Heart left ventricle (tissue), 16 donors: ENCODE measurements at regions of chr3 and their contacts with region 1.

Region 1: GRCh38 chr3:48088749-48089466 is 72.7 kb upstream of the MAP4 start:
- DNase-seq: peak; percentile 97 to 99 (median 98)
- ATAC-seq: peak; percentile 85 to 98 (median 94)
- H3K4me3 ChIP-seq: peak overlapping the region; percentile 55 to 100 (median 94)
- H3K27ac ChIP-seq: peak overlapping the region; percentile 90 to 100 (median 98)
- H3K4me1 ChIP-seq: peaks cover 0 to 44% (median 39%) of the 10 kb centered on the region in 12 donors
- H3K27me3 ChIP-seq: no peaks in the 10 kb centered on the region
- CTCF ChIP-seq: peak in 1 of 12 donors; percentile 10
- POLR2A ChIP-seq: peak; percentile 39 to 87

Region 2: DNA sequence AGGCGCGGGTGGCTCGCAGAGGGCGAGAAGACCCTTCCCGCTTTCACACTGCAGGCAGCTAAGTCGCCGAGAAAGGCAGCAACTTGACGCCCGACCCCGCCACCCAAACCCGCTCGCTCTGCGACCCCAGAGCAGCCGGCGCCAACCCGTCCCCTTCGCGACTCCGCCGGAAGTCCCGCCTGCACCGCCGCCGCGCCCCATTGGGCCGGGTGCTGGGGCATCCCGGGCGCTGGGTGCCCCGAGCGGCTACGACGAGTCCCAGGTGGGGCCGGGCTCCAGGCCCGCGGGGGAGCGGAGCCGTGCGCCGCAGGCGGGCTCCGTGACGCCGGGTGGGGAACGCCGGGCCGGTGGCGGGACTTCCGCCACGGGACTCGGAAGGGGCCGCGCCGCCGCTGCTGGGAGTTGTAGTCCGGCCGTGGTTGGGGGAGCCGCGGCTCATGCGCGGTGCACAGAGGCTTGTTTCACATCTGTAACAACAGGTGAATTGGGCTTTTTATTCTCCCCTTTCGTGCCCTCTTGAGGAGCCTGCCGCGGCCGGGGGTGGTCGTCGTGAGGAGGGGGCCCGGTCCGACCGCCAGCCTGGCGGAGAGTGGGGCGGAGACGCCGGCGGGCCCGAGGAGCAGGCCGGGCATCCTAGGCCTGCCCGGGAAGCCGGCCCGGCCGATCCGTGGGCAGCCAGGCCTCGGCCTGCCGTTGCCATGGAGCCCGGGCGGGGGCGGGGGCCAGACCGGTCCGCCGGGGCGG is 286.0 kb before region 1 on chr3 and contains the start of gene DHX30:
- intact Hi-C with region 1: no loop called
- DNase-seq: peak; percentile 91 to 95 (median 92)
- ATAC-seq: peak; percentile 79 to 96 (median 91)
- H3K4me3 ChIP-seq: peak within 1 kb of the TSS; percentile 69 to 99 (median 90)
- H3K27ac ChIP-seq: peak within 1 kb of the TSS; percentile 94 to 99 (median 98)
- H3K4me1 ChIP-seq: peaks cover 0 to 26% (median 16%) of the 10 kb centered on the region in 12 donors
- H3K27me3 ChIP-seq: no peaks in the 10 kb centered on the region
- CTCF ChIP-seq: no peak
- POLR2A ChIP-seq: peak in 1 of 2 donors; percentile 90
- total RNA-seq, gene DHX30: 41.2 to 74.4 (median 49.4) TPM

Region 3: DNA sequence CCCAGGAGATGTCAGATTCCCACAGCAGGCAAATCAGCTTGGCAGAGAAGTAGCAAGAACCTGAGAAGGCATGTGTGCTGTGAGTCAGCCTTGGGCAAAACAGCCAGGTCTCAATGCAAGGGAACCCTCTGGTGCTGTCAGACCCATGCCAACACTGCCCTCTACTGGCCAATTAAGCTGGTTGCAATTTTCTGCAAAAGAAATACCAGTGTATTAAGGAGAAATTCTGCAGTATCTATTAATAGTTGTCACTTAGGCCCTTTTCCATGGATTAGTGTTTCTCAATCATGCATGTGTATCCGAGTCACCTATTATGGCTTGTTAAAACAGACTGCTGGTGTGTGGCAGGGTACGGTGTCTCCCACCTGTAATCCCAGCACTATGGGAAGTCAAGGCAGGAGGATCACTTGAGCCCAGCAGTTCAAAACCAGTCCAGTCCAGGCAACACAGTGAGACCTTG is 98.9 kb before region 1 on chr3:
- intact Hi-C with region 1: loop called in 4 of 10 experiments (anchors 5 kb)
- DNase-seq: peak; percentile 69 to 85 (median 79)
- ATAC-seq: peak; percentile 85 to 97 (median 95)
- H3K4me3 ChIP-seq: no peak overlapping the region
- H3K27ac ChIP-seq: peak overlapping the region in 1 of 12 donors; percentile 7
- H3K4me1 ChIP-seq: peaks cover 0 to 38% (median 26%) of the 10 kb centered on the region in 12 donors
- H3K27me3 ChIP-seq: no peaks in the 10 kb centered on the region
- CTCF ChIP-seq: peak; percentile 85 to 95 (median 91)
- POLR2A ChIP-seq: no peak

Region 4: GRCh38 chr3:48018841-48019240 is 70.1 kb before region 1 on chr3:
- intact Hi-C with region 1: loop called in 6 of 10 experiments (anchors 2 to 5 kb)
- DNase-seq: peak in 4 of 5 donors; percentile 16 to 59 (median 28)
- ATAC-seq: peak in 3 of 4 donors; percentile 53 to 74 (median 67)
- H3K4me3 ChIP-seq: no peak overlapping the region
- H3K27ac ChIP-seq: peak overlapping the region; percentile 16 to 87 (median 78)
- H3K4me1 ChIP-seq: peaks cover 10 to 84% (median 54%) of the 10 kb centered on the region in 12 donors
- H3K27me3 ChIP-seq: no peaks in the 10 kb centered on the region
- CTCF ChIP-seq: no peak
- POLR2A ChIP-seq: no peak

Region 5: DNA sequence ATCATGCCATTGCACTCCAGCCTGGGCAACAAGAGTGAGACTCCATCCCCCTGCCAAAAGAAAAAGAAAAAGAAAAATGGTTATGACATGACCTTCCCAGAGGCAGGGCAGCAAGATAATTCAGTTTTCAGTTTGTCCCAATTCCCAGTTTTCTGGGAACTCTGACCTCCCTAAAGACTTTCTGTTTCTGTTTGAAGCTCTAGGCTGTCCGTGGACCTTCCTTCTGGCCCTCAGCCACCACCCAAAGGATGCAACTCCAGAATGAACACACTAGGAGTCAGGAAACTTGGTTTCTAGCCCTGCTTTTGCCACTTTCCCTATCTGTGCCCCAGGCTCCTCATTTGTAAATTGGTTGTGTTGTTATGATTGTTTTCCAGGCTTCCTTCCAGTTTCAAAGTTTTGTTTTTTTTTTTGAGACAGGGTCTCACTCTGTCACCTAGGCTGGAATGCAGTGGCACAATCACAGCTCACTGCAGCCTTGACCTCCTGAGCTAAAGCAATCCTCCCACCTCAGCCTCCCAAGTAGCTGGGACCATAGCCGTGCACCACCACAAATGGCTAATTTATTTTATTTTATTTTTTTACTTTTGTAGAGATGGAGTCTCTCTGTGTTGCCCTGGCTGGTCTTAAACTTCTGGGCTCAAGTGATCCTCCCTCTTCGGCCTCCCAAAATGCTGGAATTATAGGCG is 30.7 kb after region 1 on chr3:
- intact Hi-C with region 1: no loop called
- DNase-seq: peak; percentile 58 to 74 (median 70)
- ATAC-seq: peak; percentile 61 to 91 (median 78)
- H3K4me3 ChIP-seq: no peak overlapping the region
- H3K27ac ChIP-seq: peak overlapping the region; percentile 6 to 69 (median 52)
- H3K4me1 ChIP-seq: peaks cover 0 to 22% (median 6%) of the 10 kb centered on the region in 12 donors
- H3K27me3 ChIP-seq: no peaks in the 10 kb centered on the region
- CTCF ChIP-seq: peak in 2 of 12 donors; percentile 17 to 19
- POLR2A ChIP-seq: no peak

Region 6: DNA sequence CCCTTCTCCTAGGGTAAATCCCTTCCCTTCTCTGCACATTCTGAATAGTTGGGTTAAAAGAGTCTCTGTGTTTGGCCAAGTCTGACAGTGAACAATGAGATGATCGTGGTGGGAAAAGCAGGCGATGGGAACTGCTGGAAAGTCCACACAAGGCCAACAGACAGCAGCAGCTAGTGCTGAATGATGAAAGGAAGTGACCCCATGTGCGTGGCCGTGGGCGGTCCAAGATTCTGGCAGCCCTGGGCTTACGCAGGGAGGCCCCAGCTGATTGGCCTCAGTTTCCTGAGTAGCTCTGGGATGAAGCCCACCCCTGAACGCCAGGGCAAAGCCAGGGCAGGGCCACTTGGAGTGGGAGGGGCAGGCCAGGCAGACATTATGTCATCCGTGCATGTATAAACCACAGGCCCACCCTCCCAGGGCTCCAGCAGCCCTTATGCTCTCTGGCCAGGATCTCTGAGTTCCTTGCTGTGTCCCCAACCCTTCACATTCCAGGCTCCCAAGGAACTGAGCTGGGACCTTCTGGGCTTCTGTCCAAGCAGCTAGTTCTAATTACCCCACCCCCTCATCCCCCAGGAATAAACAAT is 41.5 kb after region 1 on chr3:
- intact Hi-C with region 1: loop called in 4 of 10 experiments (anchors 1 to 5 kb)
- DNase-seq: peak; percentile 89 to 94 (median 91)
- ATAC-seq: peak; percentile 95 to 98 (median 98)
- H3K4me3 ChIP-seq: peak overlapping the region in 3 of 12 donors; percentile 2 to 26 (median 8)
- H3K27ac ChIP-seq: peak overlapping the region; percentile 68 to 91 (median 83)
- H3K4me1 ChIP-seq: peaks cover 0 to 31% (median 22%) of the 10 kb centered on the region in 12 donors
- H3K27me3 ChIP-seq: no peaks in the 10 kb centered on the region
- CTCF ChIP-seq: no peak
- POLR2A ChIP-seq: no peak

Region 7: GRCh38 chr3:48142316-48142870 is 53.5 kb after region 1 on chr3:
- intact Hi-C with region 1: loop called in 2 of 10 experiments (anchors 5 kb)
- DNase-seq: no peak
- ATAC-seq: no peak
- H3K4me3 ChIP-seq: no peak overlapping the region
- H3K27ac ChIP-seq: peak overlapping the region in 1 of 12 donors; percentile 24
- H3K4me1 ChIP-seq: peaks cover 0 to 24% (median 11%) of the 10 kb centered on the region in 12 donors
- H3K27me3 ChIP-seq: no peaks in the 10 kb centered on the region
- CTCF ChIP-seq: no peak
- POLR2A ChIP-seq: no peak